Activated T-helper 1 cell treated with anti-CD3 and anti-CD28 coated beads, Interleukin-12 subunit alpha, Interleukin-12 subunit beta, Interleukin-2, Interleukin-4 antibody, amounts not matched to agents 30 ng/mL and 10 ng/mL and 1 ng/mL, durations not matched to agents 14 hours and 24 hours and 36 hours (primary cell): ENCODE measurements at regions of chr2 and their contacts with region 1.

Region 1: GRCh38 chr2:96868555-96869280 is 1.2 kb downstream of the SEMA4C start:
- DNase-seq: peak; percentile 52
- H3K4me3 Mint-ChIP-seq: peak overlapping the region; percentile 83
- H3K27ac Mint-ChIP-seq: peak overlapping the region; percentile 81
- H3K4me1 Mint-ChIP-seq: peaks cover 33% of the 10 kb centered on the region
- H3K27me3 Mint-ChIP-seq: peaks cover 24% of the 10 kb centered on the region

Region 2: GRCh38 chr2:96887412-96888012 is 18.8 kb after region 1 on chr2:
- intact Hi-C with region 1: loop called (anchors 2 kb)
- DNase-seq: no peak
- H3K4me3 Mint-ChIP-seq: no peak overlapping the region
- H3K27ac Mint-ChIP-seq: no peak overlapping the region
- H3K4me1 Mint-ChIP-seq: peaks cover 14% of the 10 kb centered on the region
- H3K27me3 Mint-ChIP-seq: peaks cover 2% of the 10 kb centered on the region

Region 3: DNA sequence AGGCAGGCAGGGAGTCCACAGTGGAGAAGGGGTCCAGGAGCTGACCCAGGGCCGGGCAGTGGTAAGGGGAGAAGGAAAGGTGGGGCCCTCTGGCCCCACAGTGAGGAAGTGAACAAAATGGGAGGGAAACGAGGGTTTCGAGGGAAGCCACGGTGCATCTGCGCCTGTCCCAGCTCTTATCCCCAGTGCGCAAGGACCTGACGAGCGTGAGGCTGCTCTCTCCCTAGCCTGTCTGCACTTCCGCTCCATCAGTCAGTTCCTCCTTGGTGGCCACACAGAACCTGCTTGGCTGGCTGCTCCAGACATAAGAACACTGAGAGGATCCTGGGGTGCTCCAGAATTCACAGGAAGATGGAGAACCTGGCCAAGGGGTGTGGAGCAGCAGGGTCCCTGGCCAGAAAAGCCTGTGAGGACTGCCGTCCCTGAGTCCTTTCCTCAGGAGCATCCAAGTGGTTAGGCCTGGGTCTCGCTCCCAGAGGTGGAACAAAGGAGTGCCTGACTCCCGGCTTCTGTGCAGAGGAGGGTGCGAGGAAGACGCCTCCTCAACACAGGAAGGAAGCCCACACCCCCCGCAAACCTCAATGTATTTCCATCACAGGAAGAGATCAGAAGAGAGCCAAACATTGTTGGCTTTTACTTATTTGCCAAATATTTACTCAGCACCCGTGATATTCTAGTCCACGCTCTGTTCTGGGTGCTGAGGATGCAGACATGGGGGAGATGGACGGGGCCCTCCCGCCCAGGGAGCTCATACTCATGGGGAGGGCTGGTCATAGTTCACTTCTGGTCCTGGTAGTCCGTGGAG is 44.9 kb after region 1 on chr2:
- intact Hi-C with region 1: loop called (anchors 5 kb)
- DNase-seq: peak; percentile 47
- H3K4me3 Mint-ChIP-seq: peak overlapping the region; percentile 75
- H3K27ac Mint-ChIP-seq: peak overlapping the region; percentile 83
- H3K4me1 Mint-ChIP-seq: peaks cover 29% of the 10 kb centered on the region
- H3K27me3 Mint-ChIP-seq: peaks cover 2% of the 10 kb centered on the region

Region 4: GRCh38 chr2:96960153-96960961 is 91.6 kb after region 1 on chr2:
- intact Hi-C with region 1: loop called (anchors 1 kb)
- DNase-seq: peak; percentile 70
- H3K4me3 Mint-ChIP-seq: peak overlapping the region; percentile 47
- H3K27ac Mint-ChIP-seq: peak overlapping the region; percentile 67
- H3K4me1 Mint-ChIP-seq: peaks cover 55% of the 10 kb centered on the region
- H3K27me3 Mint-ChIP-seq: no peaks in the 10 kb centered on the region